ENCODE measurements at regions of chr19 and their contacts with region 1.

Region 1: DNA sequence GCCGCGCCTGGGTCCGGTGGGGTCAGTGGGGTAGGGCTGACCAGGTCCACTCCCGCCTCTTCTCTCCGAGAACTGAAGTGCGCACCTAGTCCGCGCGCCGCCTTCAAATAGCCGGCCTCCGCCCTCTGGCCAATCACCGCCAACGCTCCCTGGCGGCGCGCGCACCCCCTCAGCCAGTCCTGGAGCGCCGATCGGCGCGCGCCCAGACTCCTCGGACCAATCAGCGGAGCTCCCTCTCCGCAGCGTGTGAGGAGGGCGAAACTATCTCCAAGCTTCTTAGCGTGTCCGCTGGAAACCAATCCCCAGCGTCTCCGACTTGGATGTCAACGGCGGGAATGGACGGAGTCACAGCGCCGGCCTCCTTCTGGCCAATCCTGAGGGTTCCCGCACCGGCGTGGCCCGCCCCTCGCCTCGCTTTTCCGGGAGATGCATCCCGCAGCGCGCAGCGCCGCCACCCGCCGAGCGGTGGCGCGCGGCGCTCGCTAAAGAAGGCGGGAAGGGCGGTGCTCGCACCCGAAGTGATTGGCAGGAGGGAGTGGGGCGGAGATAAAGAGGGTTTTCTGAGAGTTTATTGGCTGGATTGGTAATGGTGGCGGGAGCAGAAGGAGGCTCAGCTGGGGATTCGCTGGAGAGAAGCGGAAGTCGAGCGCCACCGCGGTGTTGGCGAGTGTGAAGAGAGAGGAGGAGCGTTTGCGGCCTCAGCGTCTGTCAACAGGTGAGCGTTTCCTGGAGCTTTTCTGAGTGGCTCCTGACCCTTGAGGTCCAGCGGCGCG is at the start of gene ASF1B:
- DNase-seq: peak; percentile 99
- H3K4me3 Mint-ChIP-seq: peak within 1 kb of the TSS; percentile 99
- H3K27ac Mint-ChIP-seq: peak within 1 kb of the TSS; percentile 98
- H3K4me1 Mint-ChIP-seq: peaks cover 30% of the 10 kb centered on the region
- H3K27me3 Mint-ChIP-seq: no peaks in the 10 kb centered on the region
- total RNA-seq, gene ASF1B: 83.4 and 88.9 TPM in 2 replicates

Region 2: DNA sequence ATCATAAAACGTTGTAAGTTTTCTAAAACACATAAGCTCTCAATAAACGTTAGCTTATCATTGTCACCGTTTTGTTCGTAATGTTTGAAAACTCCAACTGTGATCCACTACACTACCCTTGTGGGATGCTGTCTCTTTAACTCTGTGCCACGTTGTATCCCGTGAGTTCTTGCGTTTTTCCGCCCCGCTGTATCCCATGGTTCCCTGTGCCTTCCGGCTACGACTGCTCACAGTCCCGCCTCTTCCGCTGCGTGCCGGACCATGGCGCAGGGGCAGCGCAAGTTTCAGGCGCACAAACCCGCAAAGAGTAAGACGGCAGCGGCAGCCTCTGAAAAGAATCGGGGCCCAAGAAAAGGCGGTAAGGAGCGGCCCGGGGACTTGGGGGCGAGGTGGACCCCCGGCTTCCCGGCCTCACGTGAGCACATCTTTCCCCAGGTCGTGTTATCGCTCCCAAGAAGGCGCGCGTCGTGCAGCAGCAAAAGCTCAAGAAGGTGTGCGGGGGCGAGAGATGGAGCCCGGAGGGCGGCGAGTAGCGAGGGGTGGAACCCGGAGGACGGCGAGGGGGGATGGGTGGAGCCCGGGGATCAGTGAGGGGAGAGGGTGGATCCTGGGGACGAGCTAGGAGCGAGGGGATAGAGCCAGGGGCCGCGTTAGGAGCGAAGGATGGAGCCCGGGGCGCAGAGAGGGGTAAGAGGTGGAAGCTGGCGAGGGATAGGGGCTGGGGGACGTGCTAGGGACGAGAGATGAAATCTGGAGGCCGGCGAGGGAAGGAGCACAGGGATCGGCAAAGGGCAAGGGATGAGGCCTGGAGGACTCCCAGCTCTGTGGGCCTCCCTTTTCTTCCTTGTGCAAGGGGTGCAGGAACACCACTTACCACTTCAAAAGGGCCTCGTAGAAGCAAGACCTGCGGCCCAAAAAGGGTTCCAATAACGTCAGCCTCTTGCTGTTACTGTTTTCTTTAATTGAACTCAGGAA is 362.2 kb before region 1 on chr19 and contains the start of gene C19orf53:
- intact Hi-C with region 1: loop called (anchors 2 kb)
- DNase-seq: peak; percentile 87
- H3K4me3 Mint-ChIP-seq: peak within 1 kb of the TSS; percentile 99
- H3K27ac Mint-ChIP-seq: peak within 1 kb of the TSS; percentile 97
- H3K4me1 Mint-ChIP-seq: peaks cover 14% of the 10 kb centered on the region
- H3K27me3 Mint-ChIP-seq: no peaks in the 10 kb centered on the region
- total RNA-seq, gene C19orf53: 131 and 137 TPM in 2 replicates

Region 3: GRCh38 chr19:14073261-14073924 is 63.3 kb before region 1 on chr19:
- intact Hi-C with region 1: loop called (anchors 5 kb)
- DNase-seq: peak; percentile 77
- H3K4me3 Mint-ChIP-seq: peak overlapping the region; percentile 97
- H3K27ac Mint-ChIP-seq: peak overlapping the region; percentile 93
- H3K4me1 Mint-ChIP-seq: peaks cover 8% of the 10 kb centered on the region
- H3K27me3 Mint-ChIP-seq: no peaks in the 10 kb centered on the region

Region 4: GRCh38 chr19:14091081-14091812 is 45.4 kb before region 1 on chr19:
- intact Hi-C with region 1: loop called (anchors 2 kb)
- DNase-seq: peak; percentile 58
- H3K4me3 Mint-ChIP-seq: peak overlapping the region; percentile 99
- H3K27ac Mint-ChIP-seq: peak overlapping the region; percentile 99
- H3K4me1 Mint-ChIP-seq: peaks cover 11% of the 10 kb centered on the region
- H3K27me3 Mint-ChIP-seq: no peaks in the 10 kb centered on the region

Region 5: DNA sequence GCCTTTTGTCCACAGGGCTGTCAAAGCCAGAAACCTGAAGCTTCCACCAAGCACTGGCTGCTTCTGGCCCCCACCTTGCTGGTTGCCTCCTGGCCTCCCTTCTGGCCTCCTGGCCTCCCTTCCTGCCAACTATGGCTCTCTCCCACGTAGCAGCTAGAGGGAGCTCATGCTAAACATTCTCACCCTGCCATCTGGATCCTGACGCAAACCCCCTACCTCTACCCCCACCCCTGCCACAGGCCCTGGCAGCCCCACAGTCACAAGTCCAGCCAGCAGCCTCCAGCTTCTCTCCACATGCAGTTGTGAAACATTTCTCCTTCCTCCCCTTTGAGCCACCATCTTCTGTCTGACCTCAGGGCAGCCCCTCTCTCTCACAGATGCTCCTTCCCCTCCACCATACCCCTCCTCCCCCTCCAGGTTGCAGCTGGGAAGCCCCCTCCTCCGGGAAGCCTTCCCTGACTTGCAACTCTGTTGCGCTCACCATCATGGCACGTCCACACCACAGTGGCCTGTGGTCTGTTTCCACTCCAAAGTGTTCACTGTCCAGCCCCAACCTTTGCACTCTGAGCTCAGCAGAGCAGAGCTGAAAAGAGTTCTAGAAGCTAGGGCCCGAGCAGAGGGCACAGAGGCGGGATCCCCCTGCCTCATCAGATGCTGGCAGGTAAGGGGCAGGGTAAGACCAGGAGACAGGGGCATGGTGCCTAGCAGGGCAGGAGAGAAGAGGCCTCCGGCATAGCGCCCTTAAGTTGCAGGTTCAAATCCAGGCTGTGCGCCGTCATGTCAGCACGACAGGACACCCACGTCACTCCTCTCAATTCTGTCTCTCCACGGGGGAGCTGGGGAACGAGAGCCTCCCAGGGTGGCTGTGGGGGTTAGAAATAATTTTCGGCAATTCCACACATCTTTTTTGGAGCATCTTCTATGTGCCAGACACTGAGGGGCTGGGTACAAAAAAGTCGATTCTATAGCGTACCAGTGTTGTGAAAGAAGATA is 62.0 kb after region 1 on chr19:
- intact Hi-C with region 1: loop called (anchors 5 kb)
- DNase-seq: no peak
- H3K4me3 Mint-ChIP-seq: no peak overlapping the region
- H3K27ac Mint-ChIP-seq: no peak overlapping the region
- H3K4me1 Mint-ChIP-seq: peaks cover 11% of the 10 kb centered on the region
- H3K27me3 Mint-ChIP-seq: peaks cover 5% of the 10 kb centered on the region

Region 6: DNA sequence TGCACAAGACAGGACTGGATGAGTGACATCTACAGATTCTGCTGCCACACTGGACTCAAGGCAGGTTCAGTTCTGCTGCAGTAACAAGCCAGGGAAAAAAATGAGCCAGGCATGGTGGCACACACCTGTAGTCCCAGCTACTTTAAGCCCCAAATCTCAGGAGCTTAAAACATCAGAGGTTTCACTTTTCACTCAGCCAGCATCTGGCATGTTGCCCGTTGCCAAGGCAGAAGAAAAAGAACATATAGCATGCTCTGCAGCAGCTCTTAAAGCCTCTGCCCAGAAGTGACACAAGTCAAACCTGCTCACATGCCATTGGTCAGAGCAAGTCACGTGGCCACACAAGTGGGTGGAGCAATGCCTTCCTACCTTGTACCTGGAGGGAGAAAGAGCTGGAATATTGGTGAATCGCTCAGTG is 229.8 kb after region 1 on chr19:
- intact Hi-C with region 1: loop called (anchors 5 kb)
- DNase-seq: peak; percentile 84
- H3K4me3 Mint-ChIP-seq: peak overlapping the region; percentile 59
- H3K27ac Mint-ChIP-seq: peak overlapping the region; percentile 96
- H3K4me1 Mint-ChIP-seq: peaks cover 60% of the 10 kb centered on the region
- H3K27me3 Mint-ChIP-seq: no peaks in the 10 kb centered on the region

Region 7: DNA sequence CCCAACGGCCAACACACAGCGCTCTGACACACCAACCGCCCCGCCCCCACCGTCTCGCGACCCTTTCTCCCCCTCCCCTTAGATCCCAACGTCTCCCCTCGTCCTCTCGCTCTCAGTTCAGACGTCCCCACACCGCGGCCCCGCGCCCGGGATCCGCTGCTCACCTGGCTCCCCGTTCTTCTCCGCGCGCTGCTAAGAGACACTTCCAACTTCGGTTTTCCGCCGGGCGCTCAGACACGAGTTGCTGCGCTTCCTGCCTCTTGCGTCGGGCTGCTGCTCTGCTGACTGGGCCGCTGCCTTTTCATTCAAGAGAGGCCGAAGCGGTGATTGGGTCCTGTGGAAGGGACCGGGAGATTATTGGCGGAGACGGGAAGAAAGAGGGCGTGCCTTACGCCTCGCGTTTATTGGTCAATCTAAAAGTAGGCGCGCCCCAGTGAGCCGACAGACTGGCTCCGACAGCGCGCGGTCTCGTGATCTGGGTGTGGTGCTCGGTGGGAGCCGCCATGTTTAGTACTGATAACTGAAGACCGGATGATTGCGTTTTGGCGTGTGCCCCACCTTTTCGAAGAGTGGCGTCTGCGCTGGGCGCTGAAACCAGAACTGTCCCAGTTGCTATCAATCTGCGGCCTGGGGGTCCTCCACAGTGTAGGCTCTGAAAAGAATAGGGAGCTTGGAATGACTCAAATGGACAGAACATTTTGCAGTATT is 282.6 kb after region 1 on chr19 and contains the start of gene DDX39A:
- intact Hi-C with region 1: loop called (anchors 2 kb)
- DNase-seq: peak; percentile 99
- H3K4me3 Mint-ChIP-seq: peak within 1 kb of the TSS; percentile 93
- H3K27ac Mint-ChIP-seq: peak within 1 kb of the TSS; percentile 97
- H3K4me1 Mint-ChIP-seq: peaks cover 20% of the 10 kb centered on the region
- H3K27me3 Mint-ChIP-seq: no peaks in the 10 kb centered on the region
- total RNA-seq, gene DDX39A: 268 TPM in 2 replicates

Measured in activated T-helper 2 cell treated with anti-CD3 and anti-CD28 coated beads, Interferon-gamma antibody, Interleukin-2, Interleukin-4, amounts not matched to agents 10 μg/mL and 5 μg/mL and 100 μg/mL, durations not matched to agents 14 hours and 24 hours and 36 hours (primary cell).